Activated naive CD4-positive, alpha-beta T cell treated with anti-CD3 and anti-CD28 coated beads for 36 hours (primary cell): ENCODE measurements at regions of chr2 and their contacts with region 1.

Region 1: GRCh38 chr2:125696561-125696960 is 959.4 kb upstream of the GYPC start:
- DNase-seq: no peak
- H3K4me3 Mint-ChIP-seq: no peak overlapping the region
- H3K27ac Mint-ChIP-seq: no peak overlapping the region
- H3K4me1 Mint-ChIP-seq: no peaks in the 10 kb centered on the region
- H3K27me3 Mint-ChIP-seq: no peaks in the 10 kb centered on the region

Region 2: GRCh38 chr2:125643585-125643984 is 53.0 kb before region 1 on chr2:
- CTCF ChIA-PET with region 1: no interaction called
- intact Hi-C with region 1: no loop called
- DNase-seq: no peak
- H3K4me3 Mint-ChIP-seq: no peak overlapping the region
- H3K27ac Mint-ChIP-seq: no peak overlapping the region
- H3K4me1 Mint-ChIP-seq: no peaks in the 10 kb centered on the region
- H3K27me3 Mint-ChIP-seq: no peaks in the 10 kb centered on the region

Region 3: GRCh38 chr2:125684932-125685331 is 11.6 kb before region 1 on chr2:
- CTCF ChIA-PET with region 1: no interaction called
- intact Hi-C with region 1: loop called (anchors 1 kb)
- DNase-seq: no peak
- H3K4me3 Mint-ChIP-seq: no peak overlapping the region
- H3K27ac Mint-ChIP-seq: no peak overlapping the region
- H3K4me1 Mint-ChIP-seq: no peaks in the 10 kb centered on the region
- H3K27me3 Mint-ChIP-seq: no peaks in the 10 kb centered on the region